IMR-90 (cell line): ENCODE measurements at regions of chr6 and their contacts with region 1.

Region 1: GRCh38 chr6:100121854-100122609 is 128.0 kb upstream of the MCHR2 start:
- DNase-seq: no peak
- ATAC-seq: peak; percentile 59
- H3K4me3 ChIP-seq: no peak overlapping the region
- H3K27ac ChIP-seq: no peak overlapping the region
- H3K4me1 ChIP-seq: no peaks in the 10 kb centered on the region; the same call in 1 of the 2 replicates
- H3K27me3 ChIP-seq: peaks cover 32% of the 10 kb centered on the region
- CTCF ChIP-seq: no peak
- POLR2A ChIP-seq: no peak
- RAD21 ChIP-seq: no peak

Region 2: GRCh38 chr6:100105138-100105753 is 16.8 kb before region 1 on chr6:
- CTCF ChIA-PET with region 1: interaction called, 10 read pairs
- POLR2A ChIA-PET with region 1: no interaction called
- dilution Hi-C with region 1: no loop called
- in situ Hi-C with region 1: no loop called
- intact Hi-C with region 1: no loop called
- DNase-seq: no peak
- ATAC-seq: no peak
- H3K4me3 ChIP-seq: no peak overlapping the region
- H3K27ac ChIP-seq: no peak overlapping the region
- H3K4me1 ChIP-seq: peaks cover 9% of the 10 kb centered on the region
- H3K27me3 ChIP-seq: peaks cover 7% of the 10 kb centered on the region
- CTCF ChIP-seq: no peak
- POLR2A ChIP-seq: no peak
- RAD21 ChIP-seq: no peak